Body of pancreas (tissue), 4 donors: ENCODE measurements at regions of chr15 and their contacts with region 1.

Region 1: DNA sequence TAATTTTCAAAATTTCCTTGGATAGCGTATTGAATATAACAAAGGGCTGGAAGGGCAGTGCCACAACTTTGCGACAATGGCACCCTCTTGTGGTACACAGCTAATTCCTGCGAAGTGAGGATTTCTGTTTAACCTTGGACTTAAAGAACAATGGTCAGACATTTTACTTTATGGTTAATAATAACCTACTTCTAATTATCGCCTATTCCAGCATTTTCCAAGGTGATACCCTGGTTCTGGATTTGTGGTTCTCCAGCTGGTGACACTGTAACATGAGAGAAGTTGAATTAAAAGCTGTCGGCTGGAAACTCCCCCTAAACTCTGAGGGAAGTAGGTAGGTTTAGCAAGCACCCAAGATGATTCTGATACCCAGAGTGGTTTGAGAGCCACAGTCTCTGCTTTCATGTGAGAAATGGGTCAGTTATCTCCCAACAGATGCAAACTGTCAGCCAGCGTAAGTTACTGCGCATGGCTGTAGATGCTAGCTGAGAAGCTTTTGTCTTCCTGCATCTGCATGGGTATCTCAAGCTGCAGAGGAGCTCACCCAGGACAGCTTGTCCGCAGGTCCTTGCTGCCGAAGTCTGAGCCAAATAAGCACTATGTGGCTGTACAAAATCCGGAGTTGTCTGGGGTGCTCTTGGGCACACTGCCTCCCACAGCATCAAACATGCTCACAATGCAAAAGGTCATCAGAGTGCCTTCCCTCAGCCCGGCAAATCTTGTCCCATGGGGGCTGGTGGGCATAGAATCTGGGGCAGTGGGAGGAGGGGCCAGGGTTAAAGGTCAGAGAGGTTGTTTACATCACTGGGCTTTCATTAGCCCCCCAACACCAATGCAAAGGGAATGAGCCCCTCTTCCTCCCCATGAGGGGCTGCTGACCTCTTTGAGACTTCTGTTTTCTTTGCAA is 6.6 kb upstream of the CHSY1 start:
- DNase-seq: peak; percentile 70 to 78 (median 75)
- ATAC-seq: peak; percentile 74
- H3K4me3 ChIP-seq: no peak overlapping the region
- H3K27ac ChIP-seq: no peak overlapping the region
- H3K4me1 ChIP-seq: peaks cover 7% of the 10 kb centered on the region
- H3K27me3 ChIP-seq: no peaks in the 10 kb centered on the region
- CTCF ChIP-seq: peak; percentile 49 to 94 (median 85)
- POLR2A ChIP-seq: no peak

Region 2: GRCh38 chr15:101014921-101015841 is 243.3 kb before region 1 on chr15:
- intact Hi-C with region 1: loop called (anchors 5 kb)
- DNase-seq: peak; percentile 66 to 74 (median 71)
- ATAC-seq: peak; percentile 75
- H3K4me3 ChIP-seq: no peak overlapping the region
- H3K27ac ChIP-seq: no peak overlapping the region
- H3K4me1 ChIP-seq: no peaks in the 10 kb centered on the region
- H3K27me3 ChIP-seq: no peaks in the 10 kb centered on the region
- CTCF ChIP-seq: peak; percentile 69 to 82 (median 77)
- POLR2A ChIP-seq: no peak

Region 3: GRCh38 chr15:101088788-101089583 is 169.5 kb before region 1 on chr15:
- intact Hi-C with region 1: loop called (anchors 5 kb)
- DNase-seq: peak; percentile 70 to 82 (median 74)
- ATAC-seq: peak; percentile 86
- H3K4me3 ChIP-seq: no peak overlapping the region
- H3K27ac ChIP-seq: no peak overlapping the region
- H3K4me1 ChIP-seq: no peaks in the 10 kb centered on the region
- H3K27me3 ChIP-seq: no peaks in the 10 kb centered on the region
- CTCF ChIP-seq: peak; percentile 88 to 100 (median 97)
- POLR2A ChIP-seq: no peak

Region 4: DNA sequence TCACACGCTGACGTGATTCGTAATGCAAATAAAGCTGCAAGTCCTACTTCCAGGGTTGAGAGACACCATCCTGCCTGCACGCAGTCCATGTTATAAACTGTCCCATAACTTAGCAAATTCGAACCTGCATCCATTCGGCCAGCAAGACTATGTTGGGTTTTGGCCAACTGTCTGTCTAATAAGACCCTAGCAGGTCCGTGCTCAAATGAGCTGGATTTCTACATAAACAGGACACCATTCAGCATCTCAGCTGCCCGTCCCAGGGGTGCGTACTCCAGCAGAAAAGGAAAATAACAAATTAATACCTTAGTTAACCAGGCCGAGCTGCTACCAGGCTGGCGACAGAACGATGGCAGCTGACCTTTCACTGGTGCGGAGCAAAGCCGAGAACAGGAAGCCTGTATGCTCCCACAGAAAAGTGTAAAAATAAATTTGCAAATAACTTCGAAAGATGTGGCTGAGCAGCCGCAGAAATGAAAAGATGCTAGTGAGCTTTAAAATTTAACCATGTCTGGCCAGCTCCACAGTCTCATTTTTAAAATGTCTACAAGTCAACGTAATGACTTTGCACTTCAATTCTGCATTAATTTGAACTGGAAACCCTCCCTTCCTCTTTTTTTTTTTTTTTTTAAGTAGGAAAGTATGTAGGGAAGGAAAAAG is 133.6 kb after region 1 on chr15:
- intact Hi-C with region 1: no loop called
- DNase-seq: no peak
- ATAC-seq: no peak
- H3K4me3 ChIP-seq: no peak overlapping the region
- H3K27ac ChIP-seq: no peak overlapping the region
- H3K4me1 ChIP-seq: no peaks in the 10 kb centered on the region
- H3K27me3 ChIP-seq: no peaks in the 10 kb centered on the region
- CTCF ChIP-seq: no peak
- POLR2A ChIP-seq: no peak